Thyroid gland (tissue), 4 donors: ENCODE measurements at regions of chr20 and their contacts with region 1.

Region 1: GRCh38 chr20:35994994-35995453 is 26.6 kb downstream of the CNBD2 start:
- DNase-seq: peak; percentile 90 to 91
- H3K4me3 ChIP-seq: no peak overlapping the region
- H3K27ac ChIP-seq: no peak overlapping the region
- H3K4me1 ChIP-seq: no peaks in the 10 kb centered on the region
- H3K27me3 ChIP-seq: no peaks in the 10 kb centered on the region
- CTCF ChIP-seq: peak; percentile 73 to 95 (median 88)
- POLR2A ChIP-seq: no peak

Region 2: GRCh38 chr20:35942243-35942642 is 52.8 kb before region 1 on chr20:
- intact Hi-C with region 1: no loop called
- DNase-seq: no peak
- H3K4me3 ChIP-seq: no peak overlapping the region
- H3K27ac ChIP-seq: no peak overlapping the region
- H3K4me1 ChIP-seq: no peaks in the 10 kb centered on the region
- H3K27me3 ChIP-seq: no peaks in the 10 kb centered on the region
- CTCF ChIP-seq: no peak
- POLR2A ChIP-seq: no peak

Region 3: DNA sequence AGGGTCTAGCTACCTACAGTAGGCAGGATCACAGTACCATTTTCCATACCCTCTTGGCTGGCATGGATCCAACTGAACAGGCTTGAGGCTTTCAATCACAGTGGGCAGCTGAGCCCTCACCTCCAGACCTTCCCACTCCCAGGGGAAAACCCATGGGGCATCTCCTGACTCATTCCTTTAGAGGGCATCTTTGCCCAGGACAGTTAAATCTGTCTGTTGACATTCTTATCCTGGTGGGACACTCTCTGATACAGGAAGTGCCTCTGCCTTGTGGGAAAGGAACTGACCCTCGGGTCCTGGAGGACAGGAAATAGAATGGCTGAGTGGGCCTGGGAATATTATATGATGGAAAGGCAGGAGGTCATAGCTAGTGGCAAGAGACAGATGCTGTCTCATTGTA is 149.3 kb after region 1 on chr20:
- intact Hi-C with region 1: loop called (anchors 5 kb)
- DNase-seq: peak in 1 of 2 donors; percentile 11
- H3K4me3 ChIP-seq: no peak overlapping the region
- H3K27ac ChIP-seq: no peak overlapping the region
- H3K4me1 ChIP-seq: peaks cover 16 to 30% of the 10 kb centered on the region in 2 donors
- H3K27me3 ChIP-seq: no peaks in the 10 kb centered on the region
- CTCF ChIP-seq: no peak
- POLR2A ChIP-seq: no peak

Region 4: GRCh38 chr20:36199345-36200257 is 204.6 kb after region 1 on chr20:
- intact Hi-C with region 1: loop called (anchors 5 kb)
- DNase-seq: peak; percentile 86 to 88
- H3K4me3 ChIP-seq: no peak overlapping the region
- H3K27ac ChIP-seq: no peak overlapping the region
- H3K4me1 ChIP-seq: peaks cover 0 to 6% of the 10 kb centered on the region in 2 donors
- H3K27me3 ChIP-seq: no peaks in the 10 kb centered on the region
- CTCF ChIP-seq: peak; percentile 61 to 94 (median 84)
- POLR2A ChIP-seq: no peak